Naive thymus-derived CD4-positive, alpha-beta T cell (primary cell): ENCODE measurements at regions of chr2 and their contacts with region 1.

Region 1: DNA sequence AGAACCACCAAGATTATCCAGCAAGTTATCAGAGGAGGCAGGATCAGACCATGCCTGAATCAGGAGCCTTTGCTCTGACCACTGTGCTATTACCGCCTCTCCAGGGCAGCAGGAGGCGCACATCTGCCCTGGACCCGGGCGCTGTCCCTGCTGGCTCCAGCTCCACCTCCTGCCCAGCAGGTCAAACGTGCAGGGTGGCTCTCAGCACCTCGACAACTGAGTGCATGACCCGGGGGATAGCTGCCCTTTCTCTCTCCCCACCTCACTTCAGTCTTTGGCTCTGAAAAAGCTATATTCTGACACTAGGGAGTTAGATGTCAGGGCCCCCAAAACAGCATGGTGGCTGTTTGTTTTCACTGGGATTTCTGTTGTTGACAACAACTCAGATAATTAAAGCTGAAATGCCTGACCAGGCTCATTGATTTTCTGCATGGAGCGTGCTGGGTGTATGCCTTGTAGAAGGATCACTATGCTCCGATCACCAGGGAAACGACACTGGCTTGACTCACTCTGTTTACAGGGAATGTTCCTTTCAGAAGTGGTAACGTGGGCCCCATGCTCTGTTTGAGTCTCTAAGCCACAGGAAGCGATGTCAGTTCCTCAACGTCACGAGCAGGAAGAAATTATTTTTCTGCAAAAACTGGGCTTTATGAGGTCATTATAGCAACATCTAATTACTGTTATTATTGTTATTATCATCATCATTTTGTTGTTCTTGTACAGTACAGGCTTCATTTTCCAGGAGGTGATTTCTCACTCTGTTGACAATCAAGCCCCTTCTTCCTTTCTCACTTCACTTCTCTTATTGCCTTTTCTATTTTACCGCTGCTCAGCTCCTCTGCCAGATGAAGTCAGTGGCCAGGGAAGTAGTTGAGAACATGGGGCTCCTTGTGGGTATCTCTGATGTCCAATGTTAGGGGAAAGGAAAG is 125.6 kb downstream of the PLB1 start:
- DNase-seq: peak; percentile 44 to 96 (median 93)
- ATAC-seq: peak; percentile 94
- H3K4me3 ChIP-seq: peak overlapping the region; percentile 40
- H3K4me3 Mint-ChIP-seq: peak overlapping the region in 9 of 10 donors; percentile 71 to 86 (median 80)
- H3K27ac ChIP-seq: peak overlapping the region; percentile 95
- H3K27ac Mint-ChIP-seq: peak overlapping the region in 5 of 9 donors; percentile 93 to 100 (median 100)
- H3K4me1 ChIP-seq: peaks cover 43 to 86% of the 10 kb centered on the region in 2 donors
- H3K4me1 Mint-ChIP-seq: peaks cover 0 to 96% (median 59%) of the 10 kb centered on the region in 7 donors
- H3K27me3 ChIP-seq: no peaks in the 10 kb centered on the region
- H3K27me3 Mint-ChIP-seq: no peaks in the 10 kb centered on the region

Region 2: DNA sequence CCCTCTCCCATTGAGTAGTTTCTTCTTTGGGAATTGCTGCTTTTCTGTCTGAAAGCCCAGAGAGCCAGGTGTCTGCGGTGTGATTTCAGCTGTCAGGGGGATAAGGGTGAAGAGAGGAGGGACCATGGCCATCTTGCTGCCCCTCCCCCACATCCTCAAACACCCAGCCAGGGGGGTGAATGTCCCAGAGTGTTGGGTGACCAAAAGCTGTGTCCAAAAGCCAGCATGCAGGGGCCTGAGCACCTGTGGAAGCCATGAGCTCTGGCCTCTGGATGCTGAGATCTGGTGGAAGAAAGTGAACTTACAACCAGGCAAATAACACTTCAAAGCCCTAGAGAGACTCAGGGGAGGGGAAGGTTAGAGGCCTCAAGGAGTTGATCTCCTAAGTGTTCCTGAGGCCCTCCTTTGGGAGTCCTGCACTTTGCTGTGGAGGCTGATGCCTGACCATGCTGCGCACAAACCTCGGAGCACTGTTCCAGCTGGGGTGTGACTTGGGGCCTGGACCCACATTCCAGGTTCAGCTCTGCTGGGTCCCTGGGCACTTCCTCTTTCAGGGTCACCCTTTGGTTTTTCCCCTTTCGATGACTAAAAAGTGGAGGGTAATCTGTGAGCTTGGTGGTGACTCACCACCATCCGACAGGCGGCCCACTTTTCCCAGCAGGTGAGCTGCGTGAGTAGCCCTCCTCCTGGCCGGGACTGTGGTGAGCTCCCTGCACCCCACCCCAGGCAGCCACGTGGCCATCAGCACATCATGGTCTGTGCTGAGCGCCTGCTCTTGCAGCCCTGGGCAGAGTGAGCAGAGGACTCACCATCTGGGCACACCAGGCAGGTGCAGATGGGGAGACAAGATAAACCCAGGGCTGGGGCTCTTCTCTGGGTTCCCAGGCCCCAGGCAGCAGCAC is 295.6 kb before region 1 on chr2:
- CTCF ChIA-PET with region 1: no interaction called
- POLR2A ChIA-PET with region 1: no interaction called
- intact Hi-C with region 1: no loop called
- DNase-seq: no peak
- ATAC-seq: peak; percentile 52
- H3K4me3 ChIP-seq: no peak overlapping the region
- H3K4me3 Mint-ChIP-seq: no peak overlapping the region
- H3K27ac ChIP-seq: no peak overlapping the region
- H3K27ac Mint-ChIP-seq: no peak overlapping the region
- H3K4me1 ChIP-seq: no peaks in the 10 kb centered on the region
- H3K4me1 Mint-ChIP-seq: peaks cover 0 to 8% (median 0%) of the 10 kb centered on the region in 7 donors
- H3K27me3 ChIP-seq: no peaks in the 10 kb centered on the region
- H3K27me3 Mint-ChIP-seq: no peaks in the 10 kb centered on the region

Region 3: DNA sequence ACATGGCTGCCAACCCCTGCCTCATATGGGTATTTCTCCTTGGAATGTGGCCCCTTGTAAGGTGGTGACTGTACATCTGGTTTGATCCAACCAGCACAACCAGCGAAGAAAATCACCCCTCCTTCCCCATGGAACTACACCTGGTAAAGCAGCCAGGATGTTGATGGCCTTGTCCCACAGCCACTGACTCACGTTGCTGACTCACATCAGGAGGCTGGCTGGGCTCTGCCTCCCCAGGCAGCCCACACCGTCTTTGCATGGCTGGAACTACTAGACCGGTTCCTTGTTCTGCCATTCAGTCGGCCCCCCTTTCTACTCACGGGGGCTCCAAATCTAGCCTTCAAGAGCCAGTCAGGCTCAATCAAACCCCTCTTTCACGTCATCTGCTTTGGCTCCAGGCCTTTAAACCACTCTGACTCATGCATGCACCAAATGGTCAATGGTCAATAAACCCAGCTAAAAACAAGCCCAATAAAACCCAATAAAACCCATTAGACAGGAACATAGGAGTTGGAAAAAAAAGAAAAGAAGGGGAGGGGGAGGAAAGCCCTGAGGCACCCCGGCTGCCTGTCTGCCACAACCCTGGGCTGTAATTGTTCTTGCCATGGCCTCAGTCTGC is 10.7 kb before region 1 on chr2:
- CTCF ChIA-PET with region 1: interaction called, 4 read pairs
- POLR2A ChIA-PET with region 1: interaction called, 53 read pairs
- intact Hi-C with region 1: loop called (anchors 1 kb)
- DNase-seq: peak in 1 of 9 donors; percentile 49
- ATAC-seq: no peak
- H3K4me3 ChIP-seq: no peak overlapping the region
- H3K4me3 Mint-ChIP-seq: peak overlapping the region in 1 of 10 donors; percentile 22
- H3K27ac ChIP-seq: no peak overlapping the region
- H3K27ac Mint-ChIP-seq: peak overlapping the region in 7 of 9 donors; percentile 38 to 70 (median 52)
- H3K4me1 ChIP-seq: peaks cover 8 to 34% of the 10 kb centered on the region in 2 donors
- H3K4me1 Mint-ChIP-seq: peaks cover 6 to 43% (median 35%) of the 10 kb centered on the region in 7 donors
- H3K27me3 ChIP-seq: no peaks in the 10 kb centered on the region
- H3K27me3 Mint-ChIP-seq: no peaks in the 10 kb centered on the region

Region 4: GRCh38 chr2:28637066-28638047 is 15.9 kb after region 1 on chr2:
- CTCF ChIA-PET with region 1: interaction called, 3 read pairs
- POLR2A ChIA-PET with region 1: interaction called, 10 read pairs
- intact Hi-C with region 1: no loop called
- DNase-seq: no peak
- ATAC-seq: no peak
- H3K4me3 ChIP-seq: no peak overlapping the region
- H3K4me3 Mint-ChIP-seq: no peak overlapping the region
- H3K27ac ChIP-seq: no peak overlapping the region
- H3K27ac Mint-ChIP-seq: peak overlapping the region in 3 of 9 donors; percentile 26 to 60 (median 58)
- H3K4me1 ChIP-seq: no peaks in the 10 kb centered on the region
- H3K4me1 Mint-ChIP-seq: peaks cover 5 to 26% (median 11%) of the 10 kb centered on the region in 7 donors
- H3K27me3 ChIP-seq: no peaks in the 10 kb centered on the region
- H3K27me3 Mint-ChIP-seq: no peaks in the 10 kb centered on the region

Region 5: DNA sequence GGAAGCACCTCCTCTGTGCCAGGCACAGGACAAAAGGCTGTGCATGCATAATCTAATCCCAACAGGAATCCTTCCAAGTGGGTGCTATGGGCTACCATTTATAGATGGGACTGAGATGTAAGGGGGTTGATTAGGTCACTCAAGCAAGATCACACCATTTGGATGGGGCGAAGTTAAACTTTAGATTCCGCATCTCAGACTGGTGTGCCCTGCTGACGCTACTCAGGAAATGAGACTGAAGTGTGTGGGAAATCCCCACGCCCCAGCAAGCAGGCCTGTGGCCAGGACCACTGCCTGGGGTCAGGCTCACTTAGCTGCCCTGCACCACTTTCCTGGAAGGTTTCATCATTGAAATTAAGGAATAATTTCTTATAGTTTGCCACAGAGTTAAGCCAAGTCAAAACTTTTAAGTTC is 59.7 kb after region 1 on chr2:
- CTCF ChIA-PET with region 1: no interaction called
- POLR2A ChIA-PET with region 1: interaction called, 4 read pairs
- intact Hi-C with region 1: loop called (anchors 2 kb)
- DNase-seq: peak; percentile 22 to 73 (median 31)
- ATAC-seq: peak; percentile 95
- H3K4me3 ChIP-seq: no peak overlapping the region
- H3K4me3 Mint-ChIP-seq: peak overlapping the region in 8 of 10 donors; percentile 21 to 71 (median 46)
- H3K27ac ChIP-seq: no peak overlapping the region
- H3K27ac Mint-ChIP-seq: peak overlapping the region; percentile 32 to 90 (median 80)
- H3K4me1 ChIP-seq: peaks cover 10 to 15% of the 10 kb centered on the region in 2 donors
- H3K4me1 Mint-ChIP-seq: peaks cover 26 to 45% (median 30%) of the 10 kb centered on the region in 7 donors
- H3K27me3 ChIP-seq: no peaks in the 10 kb centered on the region
- H3K27me3 Mint-ChIP-seq: no peaks in the 10 kb centered on the region